WTC11 (cell line): ENCODE measurements at regions of chr19 and their contacts with region 1.

Region 1: DNA sequence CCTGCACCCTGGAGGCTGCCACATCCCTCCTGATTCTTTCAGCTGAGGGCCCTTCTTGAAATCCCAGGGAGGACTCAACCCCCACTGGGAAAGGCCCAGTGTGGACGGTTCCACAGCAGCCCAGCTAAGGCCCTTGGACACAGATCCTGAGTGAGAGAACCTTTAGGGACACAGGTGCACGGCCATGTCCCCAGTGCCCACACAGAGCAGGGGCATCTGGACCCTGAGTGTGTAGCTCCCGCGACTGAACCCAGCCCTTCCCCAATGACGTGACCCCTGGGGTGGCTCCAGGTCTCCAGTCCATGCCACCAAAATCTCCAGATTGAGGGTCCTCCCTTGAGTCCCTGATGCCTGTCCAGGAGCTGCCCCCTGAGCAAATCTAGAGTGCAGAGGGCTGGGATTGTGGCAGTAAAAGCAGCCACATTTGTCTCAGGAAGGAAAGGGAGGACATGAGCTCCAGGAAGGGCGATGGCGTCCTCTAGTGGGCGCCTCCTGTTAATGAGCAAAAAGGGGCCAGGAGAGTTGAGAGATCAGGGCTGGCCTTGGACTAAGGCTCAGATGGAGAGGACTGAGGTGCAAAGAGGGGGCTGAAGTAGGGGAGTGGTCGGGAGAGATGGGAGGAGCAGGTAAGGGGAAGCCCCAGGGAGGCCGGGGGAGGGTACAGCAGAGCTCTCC is 6.9 kb upstream of the CEACAM5 start:
- DNase-seq: peak; percentile 73
- ATAC-seq: peak; percentile 78
- H3K4me3 Mint-ChIP-seq: no peak overlapping the region
- H3K27ac Mint-ChIP-seq: no peak overlapping the region
- H3K4me1 Mint-ChIP-seq: no peaks in the 10 kb centered on the region
- H3K27me3 Mint-ChIP-seq: peaks cover 13% of the 10 kb centered on the region
- CTCF ChIP-seq: peak; percentile 61

Region 2: DNA sequence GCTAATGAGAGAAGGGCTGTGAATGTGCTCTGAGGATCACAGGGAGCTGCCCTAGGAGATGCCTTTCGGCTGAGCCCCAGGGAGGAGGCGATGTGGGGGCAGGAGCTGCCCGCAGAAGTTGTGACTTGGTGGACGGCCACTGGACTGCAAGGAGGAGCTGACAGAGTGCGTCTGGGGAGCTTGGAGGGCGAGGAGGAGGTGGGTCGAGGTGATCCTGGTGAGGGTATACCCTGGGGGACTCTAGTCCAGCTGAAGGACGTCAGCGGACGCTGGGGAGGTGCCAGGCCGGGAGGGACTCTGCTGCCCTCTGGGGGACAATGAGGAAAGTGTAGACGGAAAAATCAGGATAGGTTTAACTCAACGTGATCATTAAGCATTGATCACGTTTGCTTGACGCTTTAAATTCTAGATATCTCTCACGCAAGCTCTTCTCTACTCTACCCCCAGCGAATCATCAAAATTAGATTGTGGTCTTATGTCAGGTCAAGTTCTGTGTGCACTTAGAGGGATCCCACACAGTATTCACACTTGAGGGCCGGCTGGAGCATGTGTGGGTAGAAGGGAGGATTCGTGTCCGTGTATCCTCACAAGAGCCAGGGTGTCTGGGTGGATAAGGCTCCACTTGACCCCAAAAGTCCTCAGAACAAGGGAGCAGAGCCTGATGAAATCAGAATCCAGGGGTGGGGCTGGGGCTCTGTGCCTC is 10.1 kb before region 1 on chr19:
- CTCF ChIA-PET with region 1: interaction called, 69 read pairs
- POLR2A ChIA-PET with region 1: no interaction called
- DNase-seq: peak; percentile 69
- ATAC-seq: peak; percentile 86
- H3K4me3 Mint-ChIP-seq: no peak overlapping the region; the same call in 1 of the 2 replicates
- H3K27ac Mint-ChIP-seq: no peak overlapping the region
- H3K4me1 Mint-ChIP-seq: peaks cover 2% of the 10 kb centered on the region; the same call in 1 of the 2 replicates
- H3K27me3 Mint-ChIP-seq: peaks cover 39% of the 10 kb centered on the region
- CTCF ChIP-seq: peak; percentile 61

Region 3: GRCh38 chr19:41785653-41786052 is 84.1 kb after region 1 on chr19:
- CTCF ChIA-PET with region 1: interaction called, 32 read pairs
- POLR2A ChIA-PET with region 1: no interaction called
- DNase-seq: peak; percentile 73
- ATAC-seq: peak; percentile 95
- H3K4me3 Mint-ChIP-seq: peak overlapping the region; percentile 62
- H3K27ac Mint-ChIP-seq: no peak overlapping the region
- H3K4me1 Mint-ChIP-seq: peaks cover 6% of the 10 kb centered on the region
- H3K27me3 Mint-ChIP-seq: peaks cover 43% of the 10 kb centered on the region
- CTCF ChIP-seq: peak; percentile 76